Heart left ventricle (tissue), 16 donors: ENCODE measurements at regions of chr16 and their contacts with region 1.

Region 1: GRCh38 chr16:16191493-16192167 is 31.7 kb downstream of the ABCC6 start:
- DNase-seq: peak in 1 of 5 donors; percentile 7
- ATAC-seq: no peak
- H3K4me3 ChIP-seq: no peak overlapping the region
- H3K27ac ChIP-seq: peak overlapping the region in 1 of 12 donors; percentile 22
- H3K4me1 ChIP-seq: no peaks in the 10 kb centered on the region
- H3K27me3 ChIP-seq: no peaks in the 10 kb centered on the region
- CTCF ChIP-seq: no peak
- POLR2A ChIP-seq: no peak

Region 2: DNA sequence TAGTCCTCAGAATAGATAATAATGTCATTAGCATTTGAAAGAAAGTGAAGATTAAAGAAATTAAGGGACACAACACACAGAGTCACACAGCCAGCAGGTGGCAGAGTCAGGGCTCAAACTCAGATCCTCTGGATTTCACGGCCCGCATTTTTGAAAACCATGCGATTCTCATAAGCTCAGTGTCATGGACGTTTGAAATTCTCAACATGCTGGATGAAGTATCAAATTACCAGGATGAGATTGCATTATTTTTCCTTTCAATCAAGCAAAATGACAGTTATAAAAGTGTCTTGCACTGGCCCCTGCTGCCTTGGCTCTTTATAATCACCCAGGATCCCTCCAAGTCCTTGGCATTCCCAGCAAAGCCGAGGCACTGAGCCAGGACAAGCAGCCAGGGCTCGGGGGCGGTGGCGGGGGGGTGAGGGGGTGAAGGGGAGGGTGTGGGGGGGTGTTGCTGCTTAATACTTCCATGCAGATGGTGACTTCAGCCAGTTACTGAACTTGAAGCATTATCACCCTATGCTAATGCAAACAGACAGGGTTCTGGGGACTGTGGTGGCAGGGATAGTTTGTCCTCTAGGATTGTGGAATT is 763.9 kb before region 1 on chr16:
- intact Hi-C with region 1: loop called in 2 of 10 experiments (anchors 10 kb)
- DNase-seq: peak; percentile 69 to 83 (median 76)
- ATAC-seq: peak; percentile 72 to 93 (median 90)
- H3K4me3 ChIP-seq: peak overlapping the region in 3 of 12 donors; percentile 8 to 27 (median 19)
- H3K27ac ChIP-seq: peak overlapping the region in 6 of 12 donors; percentile 30 to 70 (median 44)
- H3K4me1 ChIP-seq: peaks cover 0 to 6% (median 0%) of the 10 kb centered on the region in 12 donors
- H3K27me3 ChIP-seq: no peaks in the 10 kb centered on the region
- CTCF ChIP-seq: peak; percentile 40 to 81 (median 68)
- POLR2A ChIP-seq: no peak

Region 3: DNA sequence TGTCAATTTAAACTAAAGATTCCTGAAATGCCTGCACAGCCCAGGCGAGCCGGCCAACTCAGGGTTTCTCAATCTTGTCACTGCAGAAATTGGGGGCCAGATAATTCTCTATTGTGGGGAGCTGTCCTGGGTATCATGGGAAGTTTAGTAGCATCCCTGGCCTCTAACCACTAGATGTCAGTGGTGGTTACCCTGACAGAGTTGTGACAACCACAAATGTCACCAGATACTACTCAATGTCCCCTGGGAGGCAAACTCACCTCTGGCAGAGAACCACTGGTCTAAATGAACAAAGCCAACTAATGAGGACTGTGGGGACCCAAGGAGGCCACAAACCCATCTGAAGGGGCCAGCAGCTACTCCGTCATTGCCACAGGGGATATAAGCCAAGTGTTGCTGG is 425.8 kb before region 1 on chr16:
- intact Hi-C with region 1: loop called in 8 of 10 experiments (anchors 2 to 10 kb)
- DNase-seq: peak in 3 of 5 donors; percentile 25 to 34 (median 30)
- ATAC-seq: peak; percentile 37 to 87 (median 78)
- H3K4me3 ChIP-seq: no peak overlapping the region
- H3K27ac ChIP-seq: peak overlapping the region in 1 of 12 donors; percentile 52
- H3K4me1 ChIP-seq: peaks cover 0 to 15% (median 4%) of the 10 kb centered on the region in 12 donors
- H3K27me3 ChIP-seq: peaks cover 0 to 7% (median 0%) of the 10 kb centered on the region in 9 donors
- CTCF ChIP-seq: peak; percentile 44 to 82 (median 68)
- POLR2A ChIP-seq: no peak

Region 4: DNA sequence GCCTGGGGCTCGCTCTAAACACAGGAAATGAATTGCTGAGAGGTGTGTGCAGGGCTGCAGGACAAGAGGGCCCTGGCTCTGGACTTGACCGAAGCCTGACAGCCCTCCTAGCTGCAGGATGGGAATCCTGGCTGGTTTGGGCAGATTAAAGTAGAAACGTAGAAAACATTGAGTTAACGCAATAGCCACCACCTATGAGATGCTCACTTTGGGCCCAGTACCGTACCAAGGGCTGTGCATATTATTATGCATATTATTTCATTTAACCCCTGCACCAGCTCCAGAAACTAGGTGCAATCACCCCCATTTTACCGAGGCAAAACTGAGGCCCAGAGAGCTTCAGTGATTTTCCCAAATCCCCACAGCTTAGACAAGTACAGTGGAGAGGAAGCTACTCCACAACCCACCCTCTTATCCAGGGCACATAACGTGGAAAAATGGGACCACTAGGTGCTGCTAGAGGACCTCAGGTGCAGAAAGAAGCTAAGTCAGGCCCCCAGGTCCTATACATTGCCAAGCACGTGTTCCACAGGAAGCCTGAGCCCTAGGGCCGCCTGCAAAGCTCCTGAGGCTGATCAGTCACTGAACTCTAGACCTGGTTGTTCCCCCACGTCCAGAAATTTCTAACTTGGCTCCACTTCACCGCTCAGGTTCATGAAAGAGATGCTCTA is 414.0 kb before region 1 on chr16:
- intact Hi-C with region 1: loop called in 2 of 10 experiments (anchors 5 to 10 kb)
- DNase-seq: no peak
- ATAC-seq: peak in 2 of 4 donors; percentile 27 to 64
- H3K4me3 ChIP-seq: no peak overlapping the region
- H3K27ac ChIP-seq: peak overlapping the region in 1 of 12 donors; percentile 39
- H3K4me1 ChIP-seq: no peaks in the 10 kb centered on the region
- H3K27me3 ChIP-seq: peaks cover 0 to 4% (median 0%) of the 10 kb centered on the region in 9 donors
- CTCF ChIP-seq: peak in 8 of 12 donors; percentile 15 to 43 (median 33)
- POLR2A ChIP-seq: no peak

Region 5: DNA sequence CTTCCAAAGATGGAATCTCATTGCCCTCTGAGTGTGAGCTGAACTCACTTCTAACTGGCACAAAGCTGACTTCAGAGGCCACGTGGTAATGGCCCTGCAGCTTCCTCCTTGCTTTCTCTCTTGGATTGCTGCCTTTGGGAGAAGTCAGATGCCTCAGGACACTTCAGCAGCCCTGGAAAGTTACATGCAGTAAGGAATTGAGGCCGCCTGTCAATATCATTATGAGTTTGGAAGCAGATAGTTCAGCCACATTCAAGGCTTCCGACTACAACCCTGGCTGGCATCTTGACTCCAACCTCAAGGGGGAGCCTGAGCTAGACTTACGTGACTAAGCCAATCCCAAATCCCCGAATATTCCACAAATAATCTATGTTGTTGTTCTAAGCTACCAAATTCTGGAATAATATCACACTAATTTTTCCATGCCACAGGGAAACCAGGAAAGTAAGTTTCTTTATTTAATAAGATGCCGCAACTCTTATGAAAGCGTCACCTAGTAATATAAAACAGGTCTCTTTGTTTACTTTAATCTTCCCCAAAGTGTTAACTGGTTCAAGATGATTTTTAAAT is 316.8 kb before region 1 on chr16:
- intact Hi-C with region 1: loop called in 1 of 10 experiments (anchors 10 kb)
- DNase-seq: peak in 4 of 5 donors; percentile 29 to 40 (median 36)
- ATAC-seq: peak in 3 of 4 donors; percentile 76 to 90 (median 77)
- H3K4me3 ChIP-seq: no peak overlapping the region
- H3K27ac ChIP-seq: peak overlapping the region in 4 of 12 donors; percentile 9 to 76 (median 19)
- H3K4me1 ChIP-seq: peaks cover 0 to 16% (median 3%) of the 10 kb centered on the region in 12 donors
- H3K27me3 ChIP-seq: no peaks in the 10 kb centered on the region
- CTCF ChIP-seq: peak; percentile 49 to 82 (median 70)
- POLR2A ChIP-seq: no peak

Region 6: GRCh38 chr16:16150117-16150877 is 41.3 kb before region 1 on chr16:
- intact Hi-C with region 1: loop called in 1 of 10 experiments (anchors 5 kb)
- DNase-seq: peak; percentile 59 to 80 (median 74)
- ATAC-seq: peak; percentile 77 to 93 (median 83)
- H3K4me3 ChIP-seq: no peak overlapping the region
- H3K27ac ChIP-seq: peak overlapping the region in 8 of 12 donors; percentile 38 to 83 (median 56)
- H3K4me1 ChIP-seq: peaks cover 0 to 18% (median 6%) of the 10 kb centered on the region in 12 donors
- H3K27me3 ChIP-seq: no peaks in the 10 kb centered on the region
- CTCF ChIP-seq: no peak
- POLR2A ChIP-seq: no peak